Activated naive CD4-positive, alpha-beta T cell treated with anti-CD3 and anti-CD28 coated beads, Interleukin-2, amount 10 ng/mL, durations not matched to agents 7 days and 5 days (primary cell): ENCODE measurements at regions of chr15 and their contacts with region 1.

Region 1: DNA sequence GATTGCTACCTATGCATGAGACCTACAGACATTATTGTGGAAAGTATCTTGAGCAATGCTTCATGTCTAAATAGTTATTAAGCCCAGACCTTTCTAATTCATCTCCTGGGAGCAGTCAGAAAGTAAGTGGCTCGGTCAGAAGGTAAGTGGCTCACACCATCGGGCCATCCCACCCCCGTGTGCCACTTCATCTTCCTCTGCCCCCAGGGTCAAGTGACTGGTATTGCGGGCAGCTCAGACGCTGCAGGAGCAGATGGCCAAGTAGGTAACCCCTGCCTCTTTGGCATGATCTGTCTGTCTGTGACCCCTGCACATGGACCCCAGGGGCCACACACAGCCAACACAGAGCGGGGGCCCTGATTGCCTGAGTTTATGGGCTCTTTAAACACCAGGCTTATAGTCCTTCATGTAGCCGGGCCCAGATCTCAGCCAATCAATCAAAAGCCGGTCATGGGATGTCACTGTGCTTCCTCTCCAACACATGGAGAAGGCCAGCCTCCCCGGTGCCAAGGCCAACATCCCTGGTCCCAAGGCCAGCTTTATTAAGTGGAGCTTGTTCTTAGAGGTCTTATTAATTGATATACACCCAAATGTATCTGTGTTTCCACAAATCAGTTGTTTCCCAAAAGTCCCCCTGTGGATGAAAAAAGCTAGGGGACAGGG is 42.9 kb downstream of the LARP6 start:
- DNase-seq: no peak
- H3K4me3 Mint-ChIP-seq: no peak overlapping the region
- H3K27ac Mint-ChIP-seq: no peak overlapping the region
- H3K4me1 Mint-ChIP-seq: no peaks in the 10 kb centered on the region
- H3K27me3 Mint-ChIP-seq: peaks cover 26% of the 10 kb centered on the region

Region 2: GRCh38 chr15:70289203-70289955 is 521.7 kb before region 1 on chr15:
- CTCF ChIA-PET with region 1: no interaction called
- DNase-seq: no peak
- H3K4me3 Mint-ChIP-seq: no peak overlapping the region
- H3K27ac Mint-ChIP-seq: no peak overlapping the region
- H3K4me1 Mint-ChIP-seq: peaks cover 2% of the 10 kb centered on the region
- H3K27me3 Mint-ChIP-seq: peaks cover 36% of the 10 kb centered on the region

Region 3: GRCh38 chr15:70679919-70680231 is 131.2 kb before region 1 on chr15:
- CTCF ChIA-PET with region 1: interaction called, 14 read pairs
- DNase-seq: no peak
- H3K4me3 Mint-ChIP-seq: no peak overlapping the region
- H3K27ac Mint-ChIP-seq: no peak overlapping the region
- H3K4me1 Mint-ChIP-seq: peaks cover 3% of the 10 kb centered on the region
- H3K27me3 Mint-ChIP-seq: peaks cover 34% of the 10 kb centered on the region

Region 4: DNA sequence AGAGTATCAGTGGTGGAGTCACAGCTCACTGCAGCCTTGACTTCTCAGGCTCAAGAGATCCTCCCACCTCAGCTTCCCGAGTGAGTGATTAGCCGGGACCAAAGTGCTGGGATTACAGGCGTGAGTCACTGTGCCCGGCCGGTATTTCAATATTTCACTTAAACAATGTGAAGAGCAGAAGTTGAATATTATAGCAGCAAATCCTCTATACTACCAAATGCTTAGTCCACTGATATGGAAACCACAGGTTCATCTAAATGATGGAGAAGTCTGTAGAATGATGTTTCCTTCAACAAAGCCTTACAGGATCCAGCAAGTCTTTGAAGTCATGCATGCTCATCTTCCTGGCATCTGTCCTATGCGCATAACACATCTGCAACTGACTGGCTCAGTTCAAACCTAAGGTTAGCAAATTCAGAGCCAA is 27.4 kb before region 1 on chr15:
- CTCF ChIA-PET with region 1: no interaction called
- DNase-seq: no peak
- H3K4me3 Mint-ChIP-seq: no peak overlapping the region
- H3K27ac Mint-ChIP-seq: no peak overlapping the region
- H3K4me1 Mint-ChIP-seq: no peaks in the 10 kb centered on the region
- H3K27me3 Mint-ChIP-seq: peaks cover 20% of the 10 kb centered on the region

Region 5: DNA sequence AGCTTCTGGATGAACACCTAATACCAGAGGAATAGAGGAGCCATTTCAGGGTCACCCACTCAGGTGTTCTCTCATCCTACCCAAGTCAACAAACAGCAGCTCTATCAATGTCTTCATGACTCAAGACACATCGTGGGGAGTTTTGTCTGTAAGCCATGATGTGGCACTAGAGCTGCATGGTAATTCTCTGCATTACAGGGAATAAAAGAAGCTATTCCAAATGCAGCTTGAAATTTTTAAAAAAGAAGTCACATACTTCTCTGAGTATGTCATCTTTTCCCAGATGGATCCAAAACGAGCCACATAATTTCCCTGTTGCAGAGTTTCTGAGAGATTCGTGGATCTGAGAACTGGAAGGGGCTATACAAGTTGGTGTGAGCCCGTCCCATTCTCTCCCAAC is 298.1 kb after region 1 on chr15:
- CTCF ChIA-PET with region 1: no interaction called
- DNase-seq: no peak
- H3K4me3 Mint-ChIP-seq: no peak overlapping the region
- H3K27ac Mint-ChIP-seq: no peak overlapping the region
- H3K4me1 Mint-ChIP-seq: no peaks in the 10 kb centered on the region
- H3K27me3 Mint-ChIP-seq: peaks cover 12% of the 10 kb centered on the region